ENCODE measurements at regions of chr16 and their contacts with region 1.

Region 1: DNA sequence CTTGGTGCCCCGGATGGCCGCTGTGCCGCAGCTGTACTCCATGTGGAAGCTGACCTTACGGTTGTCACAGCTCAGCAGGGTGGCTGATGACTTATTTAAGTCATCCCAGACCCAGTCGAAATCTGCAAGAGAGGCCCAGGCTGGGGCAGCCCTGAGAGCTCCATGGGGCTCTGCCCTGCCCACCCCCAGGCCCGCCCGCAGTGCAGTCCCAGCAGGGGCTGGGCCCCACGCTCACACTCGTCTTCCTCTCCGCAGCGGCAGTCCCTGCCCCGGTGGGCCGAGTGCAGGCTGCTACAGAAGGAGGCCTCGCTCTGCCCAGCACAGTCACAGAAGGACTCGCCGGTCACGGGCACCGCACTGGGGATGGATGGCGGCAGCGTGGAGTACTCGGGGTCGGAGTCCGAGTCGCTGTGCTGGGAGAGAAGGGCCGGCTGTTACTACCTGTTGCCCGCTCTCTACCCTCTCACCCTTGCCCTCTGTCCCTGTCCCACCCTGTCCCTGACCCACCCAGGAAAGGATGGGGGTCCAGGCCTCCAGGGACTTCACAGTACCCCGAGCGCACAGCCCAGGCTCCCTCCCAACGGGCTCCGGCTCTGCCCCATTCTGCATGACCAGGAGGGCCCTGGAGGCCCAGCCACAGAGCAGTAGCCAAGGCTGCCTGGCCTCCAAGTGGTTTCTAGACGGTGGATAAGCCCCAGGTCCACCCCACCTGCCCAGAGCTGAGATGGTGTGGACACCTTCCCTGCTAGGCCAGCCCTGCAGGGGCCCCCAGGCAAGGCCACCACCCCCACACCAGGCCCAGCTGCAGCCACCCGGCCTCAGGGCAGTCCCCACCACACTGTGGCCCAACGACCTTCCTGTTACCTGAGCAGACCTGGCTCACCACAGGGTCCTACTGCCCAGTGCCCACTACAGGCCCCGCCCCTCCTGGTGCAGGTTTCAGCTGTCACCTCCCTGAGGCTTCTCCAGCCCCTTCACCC is 3.9 kb downstream of the SPSB3 start:
- DNase-seq: peak in 2 of 3 donors; percentile 51 to 54
- ATAC-seq: no peak
- H3K4me3 ChIP-seq: no peak overlapping the region
- H3K27ac ChIP-seq: no peak overlapping the region
- H3K4me1 ChIP-seq: peaks cover 0 to 41% (median 17%) of the 10 kb centered on the region in 4 donors
- H3K27me3 ChIP-seq: no peaks in the 10 kb centered on the region
- CTCF ChIP-seq: no peak
- POLR2A ChIP-seq: no peak

Region 2: GRCh38 chr16:1823821-1824220 is 45.3 kb after region 1 on chr16:
- intact Hi-C with region 1: loop called in 1 of 2 experiments (anchors 5 kb)
- DNase-seq: peak; percentile 56 to 78 (median 74)
- ATAC-seq: peak; percentile 6 to 49 (median 31)
- H3K4me3 ChIP-seq: peak overlapping the region in 2 of 3 donors; percentile 96 to 98
- H3K27ac ChIP-seq: peak overlapping the region in 2 of 3 donors; percentile 57 to 86
- H3K4me1 ChIP-seq: peaks cover 0 to 36% (median 11%) of the 10 kb centered on the region in 4 donors
- H3K27me3 ChIP-seq: no peaks in the 10 kb centered on the region
- CTCF ChIP-seq: peak; percentile 23 to 48 (median 37)
- POLR2A ChIP-seq: no peak